ENCODE measurements at regions of chr3 and their contacts with region 1.

Region 1: GRCh38 chr3:8324740-8325139 is 176.9 kb upstream of the LMCD1 start:
- DNase-seq: peak; percentile 16 to 54 (median 36)
- ATAC-seq: peak; percentile 88
- H3K4me3 ChIP-seq: no peak overlapping the region
- H3K4me3 Mint-ChIP-seq: no peak overlapping the region
- H3K27ac ChIP-seq: no peak overlapping the region
- H3K27ac Mint-ChIP-seq: peak overlapping the region in 3 of 9 donors; percentile 1 to 22 (median 13)
- H3K4me1 ChIP-seq: peaks cover 0 to 5% of the 10 kb centered on the region in 2 donors
- H3K4me1 Mint-ChIP-seq: peaks cover 0 to 26% (median 15%) of the 10 kb centered on the region in 7 donors
- H3K27me3 ChIP-seq: no peaks in the 10 kb centered on the region
- H3K27me3 Mint-ChIP-seq: peaks cover 0 to 5% (median 0%) of the 10 kb centered on the region in 5 donors

Region 2: GRCh38 chr3:8336456-8336855 is 11.7 kb after region 1 on chr3:
- CTCF ChIA-PET with region 1: no interaction called
- POLR2A ChIA-PET with region 1: no interaction called
- intact Hi-C with region 1: no loop called
- DNase-seq: no peak
- ATAC-seq: no peak
- H3K4me3 ChIP-seq: no peak overlapping the region
- H3K4me3 Mint-ChIP-seq: no peak overlapping the region
- H3K27ac ChIP-seq: no peak overlapping the region
- H3K27ac Mint-ChIP-seq: no peak overlapping the region
- H3K4me1 ChIP-seq: no peaks in the 10 kb centered on the region
- H3K4me1 Mint-ChIP-seq: peaks cover 0 to 23% (median 3%) of the 10 kb centered on the region in 7 donors
- H3K27me3 ChIP-seq: no peaks in the 10 kb centered on the region
- H3K27me3 Mint-ChIP-seq: peaks cover 0 to 6% (median 0%) of the 10 kb centered on the region in 5 donors

Region 3: GRCh38 chr3:8371085-8371551 is 46.4 kb after region 1 on chr3:
- CTCF ChIA-PET with region 1: interaction called, 3 read pairs
- POLR2A ChIA-PET with region 1: no interaction called
- intact Hi-C with region 1: loop called in 1 of 2 experiments (anchors 5 kb)
- DNase-seq: no peak
- ATAC-seq: no peak
- H3K4me3 ChIP-seq: no peak overlapping the region
- H3K4me3 Mint-ChIP-seq: no peak overlapping the region
- H3K27ac ChIP-seq: no peak overlapping the region
- H3K27ac Mint-ChIP-seq: no peak overlapping the region
- H3K4me1 ChIP-seq: no peaks in the 10 kb centered on the region
- H3K4me1 Mint-ChIP-seq: peaks cover 0 to 6% (median 0%) of the 10 kb centered on the region in 7 donors
- H3K27me3 ChIP-seq: no peaks in the 10 kb centered on the region
- H3K27me3 Mint-ChIP-seq: peaks cover 0 to 21% (median 0%) of the 10 kb centered on the region in 5 donors